Activated CD4-positive, alpha-beta memory T cell treated with anti-CD3 and anti-CD28 coated beads for 36 hours (primary cell): ENCODE measurements at regions of chr2 and their contacts with region 1.

Region 1: GRCh38 chr2:112542123-112542983 is at the start of gene POLR1B:
- DNase-seq: peak; percentile 84
- H3K4me3 Mint-ChIP-seq: no peak within 1 kb of the TSS
- H3K27ac Mint-ChIP-seq: no peak within 1 kb of the TSS
- H3K4me1 Mint-ChIP-seq: peaks cover 21% of the 10 kb centered on the region
- H3K27me3 Mint-ChIP-seq: no peaks in the 10 kb centered on the region
- total RNA-seq, gene POLR1B: 50.7 to 55.3 TPM

Region 2: DNA sequence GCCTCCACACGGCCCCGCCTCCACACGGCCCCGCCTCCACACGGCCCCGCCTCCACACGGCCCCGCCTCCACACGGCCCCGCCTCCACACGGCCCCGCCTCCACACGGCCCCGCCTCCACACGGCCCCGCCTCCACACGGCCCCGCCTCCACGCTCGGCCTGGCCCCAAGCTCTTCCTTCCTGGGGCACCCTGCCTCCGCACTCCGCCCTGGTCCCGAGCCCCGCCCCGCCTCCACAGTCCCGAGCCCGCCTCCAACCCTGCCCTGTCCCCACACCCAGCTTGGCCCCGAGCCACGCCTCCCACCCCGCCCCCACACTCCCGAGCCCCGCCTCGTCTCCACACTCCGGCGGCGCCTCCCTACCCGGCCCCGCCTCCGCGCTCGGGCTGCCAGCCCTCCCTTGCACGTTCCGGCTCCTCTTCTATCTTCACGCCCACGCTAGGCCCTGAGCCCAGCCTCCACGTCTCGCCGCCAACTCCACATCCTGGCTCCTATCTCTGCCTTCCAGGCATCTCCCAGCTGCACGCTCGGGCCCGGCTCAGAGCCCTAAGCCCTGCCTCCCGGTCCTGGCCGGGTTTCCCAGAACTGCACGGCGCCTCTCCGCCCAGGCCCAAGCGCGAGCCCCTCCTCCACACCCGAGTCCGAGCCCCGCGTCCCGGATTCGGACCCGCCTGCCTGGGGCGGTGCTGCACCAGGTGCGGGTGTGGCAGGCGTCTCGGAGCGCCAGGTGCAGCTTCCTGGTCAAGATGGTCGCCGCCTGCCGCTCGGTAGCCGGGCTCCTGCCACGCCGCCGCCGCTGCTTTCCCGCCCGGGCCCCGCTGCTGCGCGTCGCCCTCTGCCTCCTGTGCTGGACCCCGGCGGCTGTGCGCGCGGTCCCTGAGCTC is 487.3 kb before region 1 on chr2 and contains the start of gene TMEM87B:
- CTCF ChIA-PET with region 1: no interaction called
- POLR2A ChIA-PET with region 1: no interaction called
- intact Hi-C with region 1: loop called (anchors 2 kb)
- DNase-seq: peak; percentile 99
- H3K4me3 Mint-ChIP-seq: peak within 1 kb of the TSS; percentile 96
- H3K27ac Mint-ChIP-seq: peak within 1 kb of the TSS; percentile 98
- H3K4me1 Mint-ChIP-seq: peaks cover 39% of the 10 kb centered on the region
- H3K27me3 Mint-ChIP-seq: no peaks in the 10 kb centered on the region
- total RNA-seq, gene TMEM87B: 22.3 to 24.1 TPM

Region 3: DNA sequence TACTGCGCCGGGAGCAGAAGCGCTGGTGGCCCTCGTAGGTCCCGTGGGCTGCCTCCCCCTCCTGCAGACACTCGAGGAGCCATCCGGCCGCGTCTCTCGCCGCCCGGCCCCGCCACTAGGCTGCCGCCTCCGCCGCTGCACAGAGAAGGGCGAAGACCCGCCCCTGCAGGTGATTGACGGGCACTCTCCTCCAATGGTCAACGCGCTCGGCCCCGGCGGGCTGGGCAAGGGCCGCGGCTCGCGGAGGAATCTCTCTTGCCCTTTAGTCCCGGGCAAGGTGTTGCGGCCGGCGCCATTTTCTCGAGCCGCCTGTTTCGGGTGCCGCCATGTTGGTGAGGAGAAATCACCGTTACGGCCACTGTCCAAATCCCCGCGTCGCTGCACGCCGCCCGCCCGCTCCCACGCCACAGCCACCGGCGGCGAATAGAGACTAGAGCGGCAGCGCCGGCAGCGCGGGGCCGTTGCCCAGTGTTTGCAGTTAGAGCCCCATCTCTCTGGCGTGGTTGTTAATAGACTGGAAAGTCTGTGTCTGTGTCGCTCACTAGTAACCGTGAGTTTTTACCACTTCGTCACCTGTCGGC is 267.0 kb before region 1 on chr2 and contains the start of gene ZC3H6:
- CTCF ChIA-PET with region 1: no interaction called
- POLR2A ChIA-PET with region 1: no interaction called
- intact Hi-C with region 1: loop called (anchors 5 kb)
- DNase-seq: peak; percentile 100
- H3K4me3 Mint-ChIP-seq: peak within 1 kb of the TSS; percentile 93
- H3K27ac Mint-ChIP-seq: peak within 1 kb of the TSS; percentile 97
- H3K4me1 Mint-ChIP-seq: peaks cover 17% of the 10 kb centered on the region
- H3K27me3 Mint-ChIP-seq: no peaks in the 10 kb centered on the region
- total RNA-seq, gene ZC3H6: 14.4 to 15.0 TPM

Region 4: GRCh38 chr2:112584134-112584890 is 42.0 kb after region 1 on chr2 and contains the start of gene CHCHD5:
- CTCF ChIA-PET with region 1: no interaction called
- POLR2A ChIA-PET with region 1: interaction called, 3 read pairs
- intact Hi-C with region 1: loop called (anchors 1 kb)
- DNase-seq: peak; percentile 97
- H3K4me3 Mint-ChIP-seq: peak within 1 kb of the TSS; percentile 97
- H3K27ac Mint-ChIP-seq: peak within 1 kb of the TSS; percentile 99
- H3K4me1 Mint-ChIP-seq: peaks cover 30% of the 10 kb centered on the region
- H3K27me3 Mint-ChIP-seq: no peaks in the 10 kb centered on the region
- total RNA-seq, gene CHCHD5: 39.3 to 41.4 TPM